Activated CD4-positive, alpha-beta T cell treated with anti-CD3 and anti-CD28 coated beads for 36 hours (primary cell): ENCODE measurements at regions of chr10 and their contacts with region 1.

Region 1: GRCh38 chr10:119207367-119207668 is at the start of gene GRK5:
- DNase-seq: peak; percentile 97
- ATAC-seq: peak; percentile 88
- H3K4me3 Mint-ChIP-seq: peak within 1 kb of the TSS; percentile 92
- H3K27ac Mint-ChIP-seq: peak within 1 kb of the TSS; percentile 93
- H3K4me1 Mint-ChIP-seq: peaks cover 38% of the 10 kb centered on the region
- H3K27me3 Mint-ChIP-seq: no peaks in the 10 kb centered on the region
- total RNA-seq, gene GRK5: 21.2 to 24.8 TPM

Region 2: GRCh38 chr10:119165171-119166110 is 41.9 kb before region 1 on chr10 and contains the start of gene SFXN4:
- CTCF ChIA-PET with region 1: interaction called, 7 read pairs
- POLR2A ChIA-PET with region 1: interaction called, 5 read pairs
- intact Hi-C with region 1: loop called (anchors 1 kb)
- DNase-seq: peak; percentile 87
- ATAC-seq: peak; percentile 94
- H3K4me3 Mint-ChIP-seq: peak within 1 kb of the TSS; percentile 86
- H3K27ac Mint-ChIP-seq: peak within 1 kb of the TSS; percentile 94
- H3K4me1 Mint-ChIP-seq: peaks cover 40% of the 10 kb centered on the region
- H3K27me3 Mint-ChIP-seq: no peaks in the 10 kb centered on the region
- total RNA-seq, gene SFXN4: 38.7 to 44.7 TPM

Region 3: GRCh38 chr10:119233821-119234220 is 26.5 kb after region 1 on chr10:
- CTCF ChIA-PET with region 1: interaction called, 9 read pairs
- POLR2A ChIA-PET with region 1: interaction called, 3 read pairs
- intact Hi-C with region 1: loop called in 1 of 2 experiments (anchors 2 kb)
- DNase-seq: no peak
- ATAC-seq: no peak
- H3K4me3 Mint-ChIP-seq: no peak overlapping the region
- H3K27ac Mint-ChIP-seq: peak overlapping the region; percentile 86
- H3K4me1 Mint-ChIP-seq: peaks cover 61% of the 10 kb centered on the region
- H3K27me3 Mint-ChIP-seq: no peaks in the 10 kb centered on the region

Region 4: DNA sequence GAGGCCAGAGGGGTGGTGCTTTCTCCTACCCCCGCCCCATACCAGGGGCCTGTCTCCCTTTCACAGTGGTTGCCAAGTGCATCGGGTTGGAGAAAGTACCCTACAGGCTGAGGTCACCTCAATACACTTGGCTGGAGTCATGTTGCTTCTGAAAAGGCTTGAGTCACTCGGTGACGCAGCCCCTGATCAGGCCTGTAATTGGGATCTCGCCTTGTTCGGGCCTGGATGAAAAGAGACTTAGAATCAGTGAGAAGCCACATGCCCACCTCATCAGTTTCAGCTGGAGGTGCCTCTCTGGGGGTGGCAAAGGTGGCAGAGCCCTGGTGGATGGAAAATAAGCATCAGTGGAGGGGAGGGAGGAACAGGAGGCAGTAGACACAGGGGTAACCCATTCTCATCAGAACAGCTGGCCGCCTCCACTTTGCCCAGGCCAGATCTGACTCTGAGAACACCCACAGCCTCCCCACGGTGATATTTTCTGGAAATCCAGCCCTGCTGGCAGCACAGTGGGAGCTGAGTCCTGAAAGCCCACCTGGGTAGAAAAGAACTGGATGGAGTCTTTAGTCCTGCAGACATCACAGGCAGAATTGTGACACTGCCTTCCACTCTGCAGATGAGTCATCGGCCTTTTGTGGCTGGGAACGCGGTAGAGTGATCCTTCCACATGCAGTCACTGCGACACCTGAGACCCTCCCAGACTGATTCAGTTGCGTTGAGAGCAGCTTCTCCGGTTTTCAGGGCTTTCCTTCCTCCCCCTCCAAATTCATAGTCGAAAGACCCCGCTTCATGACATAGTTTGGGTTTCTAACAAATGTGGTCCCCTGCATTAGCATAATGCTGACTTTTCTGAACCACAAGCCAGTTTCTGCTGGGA is 108.0 kb after region 1 on chr10:
- CTCF ChIA-PET with region 1: interaction called, 4 read pairs
- POLR2A ChIA-PET with region 1: interaction called, 7 read pairs
- intact Hi-C with region 1: loop called in 1 of 2 experiments (anchors 1 kb)
- DNase-seq: peak; percentile 90
- ATAC-seq: peak; percentile 83
- H3K4me3 Mint-ChIP-seq: peak overlapping the region; percentile 34
- H3K27ac Mint-ChIP-seq: peak overlapping the region; percentile 94
- H3K4me1 Mint-ChIP-seq: peaks cover 56% of the 10 kb centered on the region
- H3K27me3 Mint-ChIP-seq: peaks cover 2% of the 10 kb centered on the region

Region 5: DNA sequence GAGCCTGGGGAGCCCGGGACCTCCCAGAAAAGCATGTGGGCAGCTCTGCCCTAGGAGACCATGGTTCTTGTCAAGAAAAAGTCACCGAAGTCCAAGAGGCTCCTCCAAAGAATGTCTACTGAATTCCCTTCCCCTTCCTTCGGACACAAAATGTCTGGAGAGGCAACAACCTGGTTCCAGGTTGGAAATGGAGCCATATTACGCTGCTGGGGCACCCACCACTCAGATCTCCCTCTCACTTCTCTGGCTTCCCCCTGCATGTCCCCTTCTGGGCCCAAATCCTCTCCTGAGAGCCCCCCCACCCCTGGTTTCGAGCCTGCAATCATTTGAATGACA is 282.6 kb after region 1 on chr10:
- CTCF ChIA-PET with region 1: interaction called, 6 read pairs
- POLR2A ChIA-PET with region 1: interaction called, 3 read pairs
- intact Hi-C with region 1: loop called in 1 of 2 experiments (anchors 2 kb)
- DNase-seq: no peak
- ATAC-seq: no peak
- H3K4me3 Mint-ChIP-seq: peak overlapping the region; percentile 67
- H3K27ac Mint-ChIP-seq: peak overlapping the region; percentile 92
- H3K4me1 Mint-ChIP-seq: peaks cover 43% of the 10 kb centered on the region
- H3K27me3 Mint-ChIP-seq: no peaks in the 10 kb centered on the region

Region 6: DNA sequence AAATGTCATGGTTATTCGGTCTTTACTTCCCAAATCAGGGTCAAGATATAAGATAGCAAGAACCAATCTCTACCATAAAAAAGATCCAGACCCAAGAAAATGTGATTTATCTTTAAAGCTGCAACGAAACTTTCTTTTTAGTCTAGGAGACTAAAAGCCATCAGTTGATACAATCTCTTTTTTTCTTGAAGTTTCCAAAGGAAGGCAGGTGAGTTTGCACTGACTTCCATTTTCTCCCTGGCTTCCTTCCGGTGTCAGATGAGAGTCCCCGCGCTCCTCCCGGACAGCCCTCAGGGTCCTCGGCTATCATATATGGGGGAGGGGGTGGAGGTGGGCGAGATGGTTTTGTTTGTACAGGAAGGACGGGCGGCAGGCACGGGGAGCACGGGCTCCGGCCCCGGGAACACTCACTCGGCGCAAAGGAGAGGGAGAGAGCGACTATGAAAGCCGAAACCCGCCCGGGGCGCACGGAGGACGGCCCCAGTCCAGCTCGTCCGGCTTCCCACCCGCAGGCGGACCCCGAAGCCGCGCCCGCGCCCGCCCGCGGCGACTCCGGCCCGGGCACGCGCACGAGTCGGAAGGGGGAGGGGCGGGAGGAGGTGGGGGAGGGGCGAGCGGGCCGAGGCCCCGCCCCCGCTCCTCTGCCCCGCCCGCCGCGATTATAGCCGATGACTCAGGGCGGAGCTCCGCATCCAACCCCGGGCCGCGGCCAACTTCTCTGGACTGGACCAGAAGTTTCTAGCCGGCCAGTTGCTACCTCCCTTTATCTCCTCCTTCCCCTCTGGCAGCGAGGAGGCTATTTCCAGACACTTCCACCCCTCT is 443.6 kb after region 1 on chr10 and contains the start of gene BAG3:
- CTCF ChIA-PET with region 1: interaction called, 4 read pairs
- POLR2A ChIA-PET with region 1: no interaction called
- intact Hi-C with region 1: loop called in 1 of 2 experiments (anchors 1 kb)
- DNase-seq: peak; percentile 91
- ATAC-seq: peak; percentile 48
- H3K4me3 Mint-ChIP-seq: peak within 1 kb of the TSS; percentile 84
- H3K27ac Mint-ChIP-seq: peak within 1 kb of the TSS; percentile 95
- H3K4me1 Mint-ChIP-seq: peaks cover 39% of the 10 kb centered on the region
- H3K27me3 Mint-ChIP-seq: no peaks in the 10 kb centered on the region
- total RNA-seq, gene BAG3: 23.8 to 30.7 TPM